Activated CD4-positive, alpha-beta T cell treated with anti-CD3 and anti-CD28 coated beads for 36 hours (primary cell): ENCODE measurements at regions of chr2 and their contacts with region 1.

Region 1: GRCh38 chr2:171018522-171018921 is 89.5 kb downstream of the GORASP2 start:
- DNase-seq: no peak
- ATAC-seq: peak; percentile 97
- H3K4me3 Mint-ChIP-seq: peak overlapping the region; percentile 4
- H3K27ac Mint-ChIP-seq: peak overlapping the region; percentile 63
- H3K4me1 Mint-ChIP-seq: peaks cover 43% of the 10 kb centered on the region
- H3K27me3 Mint-ChIP-seq: no peaks in the 10 kb centered on the region

Region 2: GRCh38 chr2:169438460-169439072 is 1580.0 kb before region 1 on chr2:
- CTCF ChIA-PET with region 1: no interaction called
- POLR2A ChIA-PET with region 1: no interaction called
- intact Hi-C with region 1: no loop called
- DNase-seq: no peak
- ATAC-seq: no peak
- H3K4me3 Mint-ChIP-seq: no peak overlapping the region
- H3K27ac Mint-ChIP-seq: no peak overlapping the region
- H3K4me1 Mint-ChIP-seq: no peaks in the 10 kb centered on the region
- H3K27me3 Mint-ChIP-seq: peaks cover 21% of the 10 kb centered on the region

Region 3: GRCh38 chr2:171004363-171004762 is 14.2 kb before region 1 on chr2:
- CTCF ChIA-PET with region 1: interaction called, 3 read pairs
- POLR2A ChIA-PET with region 1: no interaction called
- intact Hi-C with region 1: loop called in 1 of 2 experiments (anchors 2 kb)
- DNase-seq: no peak
- ATAC-seq: no peak
- H3K4me3 Mint-ChIP-seq: no peak overlapping the region
- H3K27ac Mint-ChIP-seq: no peak overlapping the region
- H3K4me1 Mint-ChIP-seq: peaks cover 28% of the 10 kb centered on the region
- H3K27me3 Mint-ChIP-seq: no peaks in the 10 kb centered on the region

Region 4: GRCh38 chr2:171042253-171042969 is 23.9 kb after region 1 on chr2:
- CTCF ChIA-PET with region 1: interaction called, 3 read pairs
- POLR2A ChIA-PET with region 1: no interaction called
- intact Hi-C with region 1: loop called in 1 of 2 experiments (anchors 1 kb)
- DNase-seq: no peak
- ATAC-seq: no peak
- H3K4me3 Mint-ChIP-seq: no peak overlapping the region
- H3K27ac Mint-ChIP-seq: peak overlapping the region; percentile 87
- H3K4me1 Mint-ChIP-seq: peaks cover 35% of the 10 kb centered on the region
- H3K27me3 Mint-ChIP-seq: no peaks in the 10 kb centered on the region

Region 5: DNA sequence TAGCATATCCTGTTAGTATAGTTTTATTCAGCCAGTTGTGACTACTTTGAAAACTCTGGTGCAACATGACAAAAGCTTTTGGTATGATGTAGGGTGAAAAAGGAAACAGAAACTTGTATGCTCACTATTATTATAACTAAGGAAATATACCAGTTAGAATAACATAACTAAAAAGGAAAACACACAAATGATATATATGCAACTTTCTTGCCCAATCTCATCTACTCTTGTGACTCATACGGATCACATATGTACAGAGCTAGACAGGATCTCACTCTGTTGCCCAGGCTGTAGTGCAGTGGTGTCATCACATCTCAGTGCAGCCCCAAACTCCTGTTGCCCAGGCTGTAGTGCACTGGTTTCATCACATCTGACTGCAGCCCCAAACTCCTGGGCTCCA is 154.6 kb after region 1 on chr2:
- CTCF ChIA-PET with region 1: no interaction called
- POLR2A ChIA-PET with region 1: no interaction called
- intact Hi-C with region 1: no loop called
- DNase-seq: peak; percentile 57
- ATAC-seq: peak; percentile 97
- H3K4me3 Mint-ChIP-seq: no peak overlapping the region
- H3K27ac Mint-ChIP-seq: no peak overlapping the region
- H3K4me1 Mint-ChIP-seq: peaks cover 14% of the 10 kb centered on the region
- H3K27me3 Mint-ChIP-seq: no peaks in the 10 kb centered on the region